ENCODE measurements at regions of chr11 and their contacts with region 1.

Region 1: GRCh38 chr11:78045851-78046485 is 17.7 kb upstream of the THRSP start:
- DNase-seq: peak; percentile 78
- H3K4me3 Mint-ChIP-seq: peak overlapping the region; percentile 39
- H3K27ac Mint-ChIP-seq: no peak overlapping the region
- H3K4me1 Mint-ChIP-seq: peaks cover 9% of the 10 kb centered on the region
- H3K27me3 Mint-ChIP-seq: no peaks in the 10 kb centered on the region

Region 2: GRCh38 chr11:77589521-77590193 is 456.3 kb before region 1 on chr11 and contains the start of gene AQP11:
- CTCF ChIA-PET with region 1: no interaction called
- intact Hi-C with region 1: loop called (anchors 1 kb)
- DNase-seq: peak; percentile 59
- H3K4me3 Mint-ChIP-seq: peak within 1 kb of the TSS; percentile 84
- H3K27ac Mint-ChIP-seq: no peak within 1 kb of the TSS
- H3K4me1 Mint-ChIP-seq: peaks cover 12% of the 10 kb centered on the region
- H3K27me3 Mint-ChIP-seq: no peaks in the 10 kb centered on the region
- total RNA-seq, gene AQP11: 0.24 to 0.49 TPM

Region 3: GRCh38 chr11:77776455-77776854 is 269.5 kb before region 1 on chr11:
- CTCF ChIA-PET with region 1: interaction called, 4 read pairs
- intact Hi-C with region 1: loop called (anchors 2 kb)
- DNase-seq: no peak
- H3K4me3 Mint-ChIP-seq: no peak overlapping the region
- H3K27ac Mint-ChIP-seq: no peak overlapping the region
- H3K4me1 Mint-ChIP-seq: peaks cover 58% of the 10 kb centered on the region
- H3K27me3 Mint-ChIP-seq: no peaks in the 10 kb centered on the region

Region 4: GRCh38 chr11:78000193-78000592 is 45.8 kb before region 1 on chr11:
- CTCF ChIA-PET with region 1: interaction called, 11 read pairs
- intact Hi-C with region 1: loop called (anchors 2 kb)
- DNase-seq: peak; percentile 66
- H3K4me3 Mint-ChIP-seq: no peak overlapping the region
- H3K27ac Mint-ChIP-seq: no peak overlapping the region
- H3K4me1 Mint-ChIP-seq: peaks cover 5% of the 10 kb centered on the region
- H3K27me3 Mint-ChIP-seq: no peaks in the 10 kb centered on the region

Region 5: GRCh38 chr11:78009062-78009461 is 36.9 kb before region 1 on chr11:
- CTCF ChIA-PET with region 1: interaction called, 14 read pairs
- intact Hi-C with region 1: no loop called
- DNase-seq: no peak
- H3K4me3 Mint-ChIP-seq: no peak overlapping the region
- H3K27ac Mint-ChIP-seq: no peak overlapping the region
- H3K4me1 Mint-ChIP-seq: no peaks in the 10 kb centered on the region
- H3K27me3 Mint-ChIP-seq: no peaks in the 10 kb centered on the region

Measured in activated naive CD4-positive, alpha-beta T cell treated with anti-CD3 and anti-CD28 coated beads for 36 hours (primary cell).